HEK293 (cell line): ENCODE measurements at regions of chr18 and their contacts with region 1.

Region 1: GRCh38 chr18:10560450-10561045 is 34.7 kb downstream of the NAPG start:
- H3K4me3 ChIP-seq: no peak overlapping the region
- H3K27ac ChIP-seq: no peak overlapping the region
- H3K4me1 ChIP-seq: no peaks in the 10 kb centered on the region
- CTCF ChIP-seq: peak; percentile 56

Region 2: GRCh38 chr18:10544093-10544748 is 16.3 kb before region 1 on chr18:
- CTCF ChIA-PET with region 1: interaction called, 19 read pairs
- POLR2A ChIA-PET with region 1: no interaction called
- H3K4me3 ChIP-seq: no peak overlapping the region
- H3K27ac ChIP-seq: no peak overlapping the region
- H3K4me1 ChIP-seq: no peaks in the 10 kb centered on the region
- CTCF ChIP-seq: no peak

Region 3: GRCh38 chr18:10570622-10571021 is 10.1 kb after region 1 on chr18:
- CTCF ChIA-PET with region 1: interaction called, 14 read pairs
- POLR2A ChIA-PET with region 1: no interaction called
- H3K4me3 ChIP-seq: no peak overlapping the region
- H3K27ac ChIP-seq: no peak overlapping the region
- H3K4me1 ChIP-seq: no peaks in the 10 kb centered on the region
- CTCF ChIP-seq: no peak